ENCODE measurements at regions of chr22 and their contacts with region 1.

Region 1: DNA sequence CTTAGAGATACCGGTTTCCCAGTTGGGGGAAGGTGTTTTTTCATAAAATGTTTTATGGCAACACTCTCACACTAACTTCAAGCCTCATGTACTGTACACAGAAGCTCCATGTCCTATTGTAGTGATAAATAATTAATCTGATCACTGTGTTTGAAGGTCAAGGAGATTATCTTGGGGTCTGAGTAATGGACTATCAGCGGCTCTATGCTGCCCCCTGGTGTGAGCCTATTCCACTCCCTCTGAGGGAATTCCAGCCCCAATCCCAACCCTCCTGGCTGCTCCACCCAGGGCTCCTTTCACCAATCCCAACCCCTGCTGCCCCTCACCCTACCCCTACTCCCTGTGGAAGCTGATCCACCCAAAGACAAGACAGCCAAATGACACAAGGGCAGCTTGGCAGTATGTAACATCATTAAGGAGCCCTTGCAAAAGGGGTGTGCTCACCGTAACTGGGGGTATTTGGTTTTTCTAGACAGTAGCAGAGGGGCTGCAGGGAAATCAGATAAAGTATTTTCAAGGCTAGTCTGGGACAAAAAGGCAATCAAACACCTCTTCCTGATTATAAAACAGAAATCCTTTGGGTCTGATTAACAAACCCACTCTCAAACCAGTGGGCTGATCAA is 22.3 kb downstream of the HPS4 start:
- DNase-seq: peak; percentile 41
- H3K4me3 ChIP-seq: no peak overlapping the region
- H3K27ac ChIP-seq: no peak overlapping the region
- H3K4me1 ChIP-seq: no peaks in the 10 kb centered on the region
- CTCF ChIP-seq: peak; percentile 93

Region 2: DNA sequence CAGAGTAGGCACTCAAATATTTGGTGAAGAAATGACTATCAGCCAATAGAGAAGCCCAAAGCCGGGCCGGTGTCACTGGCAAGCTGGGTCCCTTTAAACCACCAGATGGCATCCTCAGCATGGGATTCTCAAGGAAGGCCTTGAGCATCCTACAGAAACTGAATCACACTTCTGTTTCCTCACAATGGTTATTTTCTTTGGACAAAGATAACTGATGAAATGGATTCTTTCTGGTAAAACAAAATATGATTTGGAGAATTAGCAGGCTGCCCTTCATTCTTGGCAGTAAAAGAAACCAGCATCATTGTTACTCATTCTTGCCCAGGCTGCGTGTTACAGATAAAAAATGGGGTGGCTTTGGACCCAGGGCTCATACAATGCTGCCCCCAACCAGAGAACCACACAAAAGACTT is 62.6 kb before region 1 on chr22:
- CTCF ChIA-PET with region 1: no interaction called
- POLR2A ChIA-PET with region 1: no interaction called
- intact Hi-C with region 1: loop called (anchors 1 kb)
- DNase-seq: peak; percentile 71
- H3K4me3 ChIP-seq: no peak overlapping the region
- H3K27ac ChIP-seq: no peak overlapping the region
- H3K4me1 ChIP-seq: peaks cover 5% of the 10 kb centered on the region
- CTCF ChIP-seq: peak; percentile 86

Region 3: DNA sequence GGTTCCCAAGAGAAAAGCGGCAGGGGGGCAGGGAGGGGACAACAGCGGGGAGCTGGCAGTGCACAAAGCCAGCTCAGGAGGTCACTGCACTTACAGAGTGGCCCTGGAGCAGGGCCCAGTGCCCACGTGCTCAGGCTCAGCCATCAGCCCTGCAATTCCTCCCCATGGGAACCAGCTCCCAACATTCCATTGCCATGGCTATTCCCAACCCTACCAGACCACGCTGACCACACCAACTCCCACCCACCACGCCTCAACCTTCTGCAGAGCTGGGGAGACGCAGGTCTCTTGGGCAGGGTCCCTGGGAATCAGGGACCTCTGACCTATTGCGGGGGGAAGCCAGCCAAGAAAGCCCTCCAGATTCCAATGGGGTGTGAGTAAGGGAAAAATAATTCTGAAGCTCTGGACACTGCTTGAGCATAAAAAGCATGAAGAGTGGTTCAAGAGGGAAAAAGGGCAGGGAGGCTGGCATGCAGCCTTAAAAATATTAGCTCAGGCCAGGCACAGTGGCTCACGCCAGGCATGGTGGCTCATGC is 89.3 kb after region 1 on chr22:
- CTCF ChIA-PET with region 1: no interaction called
- POLR2A ChIA-PET with region 1: no interaction called
- intact Hi-C with region 1: no loop called
- DNase-seq: no peak
- H3K4me3 ChIP-seq: no peak overlapping the region
- H3K27ac ChIP-seq: no peak overlapping the region
- H3K4me1 ChIP-seq: peaks cover 41% of the 10 kb centered on the region
- CTCF ChIP-seq: no peak

Measured in OCI-LY7 (cell line).